Uterus (tissue), 4 donors: ENCODE measurements at regions of chr15 and their contacts with region 1.

Region 1: DNA sequence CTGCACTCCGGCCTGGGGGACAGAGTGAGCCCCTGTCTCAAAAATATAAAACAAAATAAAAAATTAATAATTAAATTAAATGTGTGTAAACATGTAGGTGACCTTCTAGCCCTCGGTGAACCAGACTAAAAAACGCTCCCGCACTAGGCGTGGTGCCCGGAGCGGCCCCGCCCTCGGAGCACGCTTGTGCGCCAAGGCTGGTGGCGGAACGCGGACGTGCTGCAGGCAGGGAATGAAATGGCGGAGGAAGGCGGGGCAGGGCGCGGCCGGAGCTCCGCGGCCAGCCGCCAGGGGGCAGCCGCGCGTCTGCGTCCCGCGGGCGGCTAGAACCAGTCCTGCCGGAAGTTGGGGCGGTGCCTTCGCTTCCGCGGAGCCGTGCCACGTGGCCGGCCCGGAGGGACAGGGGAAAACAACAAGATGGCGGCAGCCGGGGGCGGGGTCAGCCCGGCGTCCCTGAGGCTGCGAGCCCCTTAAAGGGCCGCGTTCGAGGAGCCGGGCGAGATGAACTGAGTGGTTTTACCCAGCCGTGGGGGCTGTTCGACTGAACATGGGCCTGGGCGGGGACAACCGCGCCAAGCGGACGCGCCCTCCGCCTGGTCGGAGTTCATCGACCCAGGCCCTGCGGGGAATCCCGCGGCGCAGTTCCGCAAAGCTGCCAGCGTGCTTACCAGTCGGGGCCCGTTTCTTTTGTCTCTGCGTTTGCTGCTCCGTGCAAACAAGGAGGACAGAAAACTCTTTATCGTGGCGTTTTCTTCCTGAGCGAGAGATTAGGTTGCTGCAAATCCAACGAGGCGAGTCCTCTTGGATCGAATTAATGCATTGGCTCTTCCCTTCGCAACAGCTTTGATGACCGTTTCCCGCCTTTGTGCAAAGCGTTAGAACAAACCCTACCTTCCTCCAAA is 90.9 kb upstream of the CHD2 start:
- DNase-seq: peak; percentile 97 to 99
- H3K4me3 ChIP-seq: peak overlapping the region; percentile 42 to 65
- H3K27ac ChIP-seq: peak overlapping the region; percentile 88 to 99
- H3K4me1 ChIP-seq: no peaks in the 10 kb centered on the region
- H3K27me3 ChIP-seq: no peaks in the 10 kb centered on the region
- CTCF ChIP-seq: peak; percentile 86 to 100 (median 98)
- POLR2A ChIP-seq: peak; percentile 84 to 85

Region 2: DNA sequence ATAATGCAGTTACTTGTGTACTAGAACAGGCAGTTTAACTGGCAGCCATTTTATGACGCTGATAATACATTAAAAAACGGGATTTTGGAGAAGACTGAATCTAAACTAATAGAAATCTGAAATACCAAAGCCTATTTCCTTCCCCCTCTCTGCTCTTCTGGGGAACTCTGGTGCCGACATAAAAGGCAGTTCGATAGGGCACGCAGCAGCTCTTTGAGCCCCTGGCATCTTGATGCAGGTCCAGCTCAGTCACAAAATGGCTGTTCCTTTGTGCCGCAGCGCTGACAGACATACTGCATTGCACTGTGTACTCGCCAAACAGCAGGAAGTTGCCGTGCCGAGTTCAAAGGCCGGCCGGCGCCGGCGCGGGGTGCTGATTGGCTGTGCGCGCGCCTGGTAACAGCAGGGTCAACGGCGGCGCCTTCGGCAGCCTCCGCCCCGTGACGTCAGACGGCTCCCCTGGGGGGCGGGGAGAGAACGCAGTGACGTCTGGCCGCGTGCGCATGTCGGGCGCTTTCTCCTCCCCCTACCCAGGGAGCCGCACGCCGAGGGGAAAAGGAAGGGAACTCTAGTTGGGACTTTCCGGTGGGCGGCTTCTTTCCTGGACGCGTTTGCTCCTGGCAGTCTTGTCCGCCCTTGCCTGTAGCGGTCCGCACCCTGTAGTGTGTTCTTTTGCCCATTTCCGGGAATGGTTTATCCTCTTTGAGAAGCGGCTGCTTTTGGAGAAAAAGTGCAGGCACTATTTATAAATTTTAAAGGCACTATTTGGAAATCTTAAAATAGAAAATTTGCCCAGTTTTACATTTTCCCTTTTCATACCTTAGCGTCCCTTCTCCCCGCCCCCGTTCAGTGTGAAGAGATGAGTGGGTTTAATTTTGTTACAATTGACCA is 95.0 kb after region 1 on chr15:
- intact Hi-C with region 1: loop called (anchors 5 kb)
- DNase-seq: peak; percentile 98 to 99
- H3K4me3 ChIP-seq: peak overlapping the region; percentile 73 to 77
- H3K27ac ChIP-seq: peak overlapping the region; percentile 98 to 100
- H3K4me1 ChIP-seq: peaks cover 4 to 9% of the 10 kb centered on the region in 2 donors
- H3K27me3 ChIP-seq: no peaks in the 10 kb centered on the region
- CTCF ChIP-seq: peak in 1 of 4 experiments; percentile 28
- POLR2A ChIP-seq: peak; percentile 92 to 95

Region 3: GRCh38 chr15:92917606-92918407 is 108.6 kb after region 1 on chr15:
- intact Hi-C with region 1: loop called (anchors 5 kb)
- DNase-seq: peak; percentile 91 to 98
- H3K4me3 ChIP-seq: peak overlapping the region in 1 of 2 donors; percentile 10
- H3K27ac ChIP-seq: peak overlapping the region; percentile 67 to 87
- H3K4me1 ChIP-seq: peaks cover 12 to 16% of the 10 kb centered on the region in 2 donors
- H3K27me3 ChIP-seq: no peaks in the 10 kb centered on the region
- CTCF ChIP-seq: peak; percentile 84 to 97 (median 90)
- POLR2A ChIP-seq: peak in 1 of 2 donors; percentile 24